Breast epithelium (tissue), 4 donors: ENCODE measurements at regions of chr1 and their contacts with region 1.

Region 1: GRCh38 chr1:227563324-227564201 is at the start of gene ZNF678:
- DNase-seq: peak; percentile 90 to 91
- H3K4me3 ChIP-seq: peak within 1 kb of the TSS; percentile 60 to 77 (median 76)
- H3K27ac ChIP-seq: peak within 1 kb of the TSS; percentile 87 to 88
- H3K4me1 ChIP-seq: no peaks in the 10 kb centered on the region
- H3K27me3 ChIP-seq: peaks cover 0 to 22% of the 10 kb centered on the region in 2 donors
- CTCF ChIP-seq: no peak
- POLR2A ChIP-seq: no peak
- total RNA-seq, gene ZNF678: 8.5 to 19.8 (median 12.8) TPM

Region 2: GRCh38 chr1:227604446-227604845 is 40.9 kb after region 1 on chr1:
- intact Hi-C with region 1: no loop called
- DNase-seq: no peak
- H3K4me3 ChIP-seq: no peak overlapping the region
- H3K27ac ChIP-seq: no peak overlapping the region
- H3K4me1 ChIP-seq: no peaks in the 10 kb centered on the region
- H3K27me3 ChIP-seq: no peaks in the 10 kb centered on the region
- CTCF ChIP-seq: no peak
- POLR2A ChIP-seq: no peak

Region 3: GRCh38 chr1:227734856-227735538 is 171.4 kb after region 1 on chr1 and contains the starts of genes JMJD4 and SNAP47:
- intact Hi-C with region 1: loop called (anchors 5 kb)
- DNase-seq: peak; percentile 84 to 90
- H3K4me3 ChIP-seq: peak within 1 kb of the TSS; percentile 76 to 87 (median 76)
- H3K27ac ChIP-seq: peak within 1 kb of the TSS; percentile 80 to 91
- H3K4me1 ChIP-seq: peaks cover 0 to 19% of the 10 kb centered on the region in 2 donors
- H3K27me3 ChIP-seq: no peaks in the 10 kb centered on the region
- CTCF ChIP-seq: no peak
- POLR2A ChIP-seq: peak; percentile 75
- total RNA-seq, gene JMJD4: 11.7 to 27.2 (median 21.0) TPM
- total RNA-seq, gene SNAP47: 28.3 to 60.3 (median 52.1) TPM